ENCODE measurements at regions of chr11 and their contacts with region 1.

Region 1: DNA sequence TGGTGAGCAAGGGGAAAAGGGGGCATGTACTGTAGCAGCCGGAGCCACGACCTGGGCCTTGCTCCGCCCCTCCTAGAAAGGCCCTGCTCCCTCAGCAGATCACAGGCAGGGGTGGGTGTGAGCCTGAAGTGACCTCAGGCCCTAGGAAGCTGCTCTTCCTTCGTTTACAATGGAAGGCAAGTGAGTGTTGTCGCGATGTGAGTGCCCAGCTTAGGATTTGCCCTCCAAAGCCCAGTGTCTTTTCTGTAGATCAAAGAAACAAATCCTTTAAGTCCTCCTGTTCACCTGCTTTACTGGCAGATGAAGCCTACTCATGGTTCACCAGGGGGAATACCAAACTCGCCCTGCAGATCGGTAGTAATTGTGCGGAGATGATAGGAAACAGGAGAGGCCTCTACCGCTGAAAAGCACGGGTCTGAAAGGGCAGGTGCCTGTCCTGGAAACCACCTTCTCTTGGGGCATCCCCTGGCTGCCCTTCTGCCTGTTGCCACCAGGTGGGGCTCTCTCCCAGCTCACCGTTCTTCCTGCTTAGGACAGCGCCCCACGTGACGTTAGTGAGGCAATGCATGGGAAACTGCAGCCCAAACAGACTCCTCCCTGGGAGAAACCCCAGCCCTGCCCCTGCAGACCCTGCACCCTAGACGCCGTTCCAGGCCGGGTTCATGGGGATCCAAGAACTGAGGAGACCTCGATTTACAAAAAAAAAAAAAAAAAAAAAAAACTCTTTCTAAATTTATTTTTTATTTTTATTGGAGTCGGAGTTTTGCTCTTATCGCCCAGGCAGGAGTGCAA is 45.9 kb upstream of the RAB1B start:
- DNase-seq: peak; percentile 88
- H3K4me3 ChIP-seq: no peak overlapping the region
- H3K27ac ChIP-seq: no peak overlapping the region
- H3K4me1 ChIP-seq: no peaks in the 10 kb centered on the region
- H3K27me3 ChIP-seq: no peaks in the 10 kb centered on the region
- CTCF ChIP-seq: peak; percentile 99 to 100
- POLR2A ChIP-seq: no peak

Region 2: DNA sequence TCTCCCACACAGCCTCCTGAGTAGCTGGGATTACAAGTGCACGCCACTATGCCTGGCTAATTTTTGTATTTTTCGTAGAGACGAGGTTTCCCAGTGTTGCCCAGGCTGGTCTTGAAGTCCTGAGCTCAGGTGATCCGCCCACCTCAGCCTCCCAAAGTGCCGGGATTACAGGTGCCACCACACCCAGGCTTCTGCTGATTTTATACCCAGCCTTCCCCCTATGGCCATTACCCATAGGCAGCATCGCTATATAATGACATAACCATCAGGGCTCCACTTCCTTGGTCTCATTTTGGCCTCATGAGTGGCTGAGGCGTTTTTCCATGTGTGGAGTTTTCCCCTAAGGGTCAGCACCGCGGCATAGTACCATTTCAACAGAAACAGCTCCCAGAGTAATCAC is 14.7 kb before region 1 on chr11:
- CTCF ChIA-PET with region 1: interaction called, 10 read pairs
- POLR2A ChIA-PET with region 1: no interaction called
- dilution Hi-C with region 1: no loop called
- intact Hi-C with region 1: no loop called
- DNase-seq: no peak
- H3K4me3 ChIP-seq: no peak overlapping the region
- H3K27ac ChIP-seq: no peak overlapping the region
- H3K4me1 ChIP-seq: no peaks in the 10 kb centered on the region
- H3K27me3 ChIP-seq: no peaks in the 10 kb centered on the region
- CTCF ChIP-seq: no peak
- POLR2A ChIP-seq: no peak

Region 3: GRCh38 chr11:66232769-66233168 is 10.2 kb after region 1 on chr11:
- CTCF ChIA-PET with region 1: interaction called, 25 read pairs
- POLR2A ChIA-PET with region 1: no interaction called
- dilution Hi-C with region 1: no loop called
- intact Hi-C with region 1: no loop called
- DNase-seq: no peak
- H3K4me3 ChIP-seq: no peak overlapping the region
- H3K27ac ChIP-seq: no peak overlapping the region
- H3K4me1 ChIP-seq: no peaks in the 10 kb centered on the region
- H3K27me3 ChIP-seq: no peaks in the 10 kb centered on the region
- CTCF ChIP-seq: no peak
- POLR2A ChIP-seq: no peak

Region 4: GRCh38 chr11:66258473-66258893 is 35.9 kb after region 1 on chr11:
- CTCF ChIA-PET with region 1: no interaction called
- POLR2A ChIA-PET with region 1: no interaction called
- dilution Hi-C with region 1: no loop called
- intact Hi-C with region 1: loop called (anchors 1 kb)
- DNase-seq: no peak
- H3K4me3 ChIP-seq: peak overlapping the region; percentile 4 to 99 (median 46)
- H3K27ac ChIP-seq: no peak overlapping the region
- H3K4me1 ChIP-seq: peaks cover 13% of the 10 kb centered on the region
- H3K27me3 ChIP-seq: peaks cover 0 to 4% of the 10 kb centered on the region in 2 experiments
- CTCF ChIP-seq: peak in 1 of 2 donors; percentile 12
- POLR2A ChIP-seq: no peak

Region 5: DNA sequence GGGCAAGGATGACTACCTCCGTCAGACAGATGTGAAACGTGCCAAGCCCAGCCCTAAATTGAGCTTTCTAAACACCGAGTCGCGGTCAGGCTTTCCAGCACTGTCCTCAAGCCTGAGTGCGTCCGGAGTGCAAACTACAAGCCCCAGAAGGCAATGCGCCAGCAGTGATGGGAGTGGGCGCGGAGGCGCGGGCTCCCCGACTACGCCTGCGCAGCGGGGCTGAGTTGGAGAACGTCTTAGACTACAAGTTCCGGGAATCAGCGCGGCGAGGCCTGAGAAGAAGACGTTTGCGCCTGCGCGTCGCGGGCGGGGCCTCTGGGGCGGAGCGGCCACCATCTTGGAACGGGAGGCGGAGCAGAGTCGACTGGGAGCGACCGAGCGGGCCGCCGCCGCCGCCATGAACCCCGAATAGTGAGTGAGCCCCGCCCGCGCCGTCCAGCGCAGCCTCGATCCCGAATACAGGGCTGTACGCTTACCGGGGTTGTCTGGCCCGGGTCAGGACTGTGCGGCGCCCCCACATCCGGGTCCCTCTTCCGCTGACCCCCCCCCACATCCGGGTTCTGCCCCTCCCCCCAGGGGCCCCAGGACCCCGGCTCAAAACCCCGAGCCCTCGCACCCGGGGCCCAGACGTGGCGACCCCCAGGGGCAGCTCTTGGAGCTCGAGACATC is 45.9 kb after region 1 on chr11 and contains the start of gene RAB1B:
- CTCF ChIA-PET with region 1: interaction called, 3 read pairs
- POLR2A ChIA-PET with region 1: no interaction called
- dilution Hi-C with region 1: no loop called
- intact Hi-C with region 1: loop called (anchors 2 kb)
- DNase-seq: peak; percentile 100
- H3K4me3 ChIP-seq: peak within 1 kb of the TSS; percentile 85 to 93 (median 91)
- H3K27ac ChIP-seq: peak within 1 kb of the TSS; percentile 74
- H3K4me1 ChIP-seq: peaks cover 12% of the 10 kb centered on the region
- H3K27me3 ChIP-seq: no peaks in the 10 kb centered on the region
- CTCF ChIP-seq: no peak
- POLR2A ChIP-seq: peak; percentile 63
- total RNA-seq, gene RAB1B: 171 and 177 TPM in 2 replicates

Region 6: DNA sequence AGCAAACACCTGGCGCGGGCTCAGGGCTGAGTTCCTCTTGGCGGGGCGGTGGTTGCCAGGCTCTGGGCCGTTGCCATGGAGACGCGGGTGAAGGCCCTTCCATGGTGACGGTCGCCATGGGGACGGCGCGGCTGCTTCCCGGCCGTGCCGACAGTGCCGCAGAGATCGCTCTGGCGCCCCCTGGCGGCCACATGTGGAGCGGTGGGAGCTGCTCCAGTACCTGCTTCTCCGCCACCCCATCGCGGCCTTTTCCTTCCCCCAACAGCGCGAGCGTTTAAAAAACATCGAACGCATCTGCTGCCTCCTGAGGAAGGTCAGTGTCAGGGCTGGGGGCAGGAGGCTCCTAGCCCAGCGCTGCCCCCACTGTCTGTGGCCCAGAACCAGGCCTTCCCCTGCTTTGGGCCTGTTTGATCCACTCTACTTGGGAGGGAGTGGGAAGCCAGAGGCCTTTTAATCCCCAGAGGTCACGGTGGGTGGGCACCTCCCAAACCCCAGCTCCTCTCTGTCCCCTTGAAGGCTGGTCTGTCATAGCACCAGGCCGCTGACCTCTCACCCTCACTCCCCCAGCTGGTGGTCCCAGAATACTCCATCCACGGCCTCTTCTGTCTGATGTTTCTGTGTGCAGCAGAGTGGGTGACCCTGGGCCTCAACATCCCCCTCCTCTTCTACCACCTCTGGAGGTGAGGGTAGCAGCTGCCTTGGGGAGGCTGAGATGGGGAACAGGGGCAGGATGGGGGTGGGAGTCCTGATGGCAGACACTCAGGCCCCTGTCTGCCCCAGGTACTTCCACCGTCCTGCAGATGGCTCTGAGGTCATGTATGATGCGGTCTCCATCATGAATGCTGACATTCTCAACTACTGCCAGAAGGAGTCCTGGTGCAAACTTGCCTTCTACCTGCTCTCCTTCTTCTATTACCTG is 60.2 kb after region 1 on chr11:
- CTCF ChIA-PET with region 1: interaction called, 25 read pairs
- POLR2A ChIA-PET with region 1: no interaction called
- dilution Hi-C with region 1: no loop called
- intact Hi-C with region 1: loop called (anchors 1 kb)
- DNase-seq: peak; percentile 92
- H3K4me3 ChIP-seq: no peak overlapping the region
- H3K27ac ChIP-seq: no peak overlapping the region
- H3K4me1 ChIP-seq: peaks cover under 1% of the 10 kb centered on the region
- H3K27me3 ChIP-seq: peaks cover 0 to 4% of the 10 kb centered on the region in 2 experiments
- CTCF ChIP-seq: peak; percentile 98 to 100
- POLR2A ChIP-seq: peak; percentile 74

Region 7: DNA sequence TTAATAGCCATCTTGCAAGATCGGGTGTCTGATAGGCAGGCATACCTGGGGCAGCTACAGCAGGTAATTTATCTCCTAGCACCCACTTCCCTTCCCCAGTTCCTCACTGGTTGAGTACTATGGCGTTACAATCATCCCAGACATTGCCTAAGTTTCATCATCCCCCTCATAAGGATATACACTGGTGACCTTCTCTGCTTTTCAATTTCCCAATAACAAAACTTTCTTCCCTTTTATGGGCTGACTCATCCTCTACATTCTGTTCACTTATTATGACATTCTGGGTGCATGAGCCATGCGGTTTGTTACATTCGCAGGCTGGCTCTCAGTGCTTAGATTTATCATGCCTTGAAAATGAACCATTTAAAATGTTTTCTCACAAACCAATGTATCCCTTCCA is 221.0 kb after region 1 on chr11:
- CTCF ChIA-PET with region 1: no interaction called
- POLR2A ChIA-PET with region 1: no interaction called
- dilution Hi-C with region 1: no loop called
- intact Hi-C with region 1: no loop called
- DNase-seq: no peak
- H3K4me3 ChIP-seq: no peak overlapping the region
- H3K27ac ChIP-seq: no peak overlapping the region
- H3K4me1 ChIP-seq: no peaks in the 10 kb centered on the region
- H3K27me3 ChIP-seq: peaks cover 0 to 2% of the 10 kb centered on the region in 2 experiments
- CTCF ChIP-seq: no peak
- POLR2A ChIP-seq: no peak

Measured in endothelial cell of umbilical vein (primary cell).